Heart right ventricle (tissue), 16 donors: ENCODE measurements at regions of chr3 and their contacts with region 1.

Region 1: GRCh38 chr3:64533617-64534317 is 154.0 kb downstream of the ADAMTS9 start:
- DNase-seq: peak; percentile 82 to 86
- ATAC-seq: peak; percentile 94 to 97 (median 96)
- H3K4me3 ChIP-seq: peak overlapping the region in 3 of 10 donors; percentile 5 to 23 (median 17)
- H3K27ac ChIP-seq: peak overlapping the region in 5 of 10 donors; percentile 1 to 41 (median 26)
- H3K4me1 ChIP-seq: peaks cover 0 to 23% (median 11%) of the 10 kb centered on the region in 9 donors
- H3K27me3 ChIP-seq: no peaks in the 10 kb centered on the region
- CTCF ChIP-seq: peak; percentile 71 to 97 (median 88)

Region 2: GRCh38 chr3:64311424-64311976 is 222.3 kb before region 1 on chr3:
- intact Hi-C with region 1: no loop called
- DNase-seq: no peak
- ATAC-seq: peak in 5 of 8 donors; percentile 7 to 77 (median 59)
- H3K4me3 ChIP-seq: no peak overlapping the region
- H3K27ac ChIP-seq: peak overlapping the region in 2 of 10 donors; percentile 24 to 52
- H3K4me1 ChIP-seq: peaks cover 0 to 14% (median 4%) of the 10 kb centered on the region in 9 donors
- H3K27me3 ChIP-seq: no peaks in the 10 kb centered on the region
- CTCF ChIP-seq: no peak

Region 3: GRCh38 chr3:64642327-64643151 is 108.8 kb after region 1 on chr3:
- intact Hi-C with region 1: loop called in 1 of 10 experiments (anchors 10 kb)
- DNase-seq: peak in 1 of 2 donors; percentile 13
- ATAC-seq: peak in 1 of 8 donors; percentile 41
- H3K4me3 ChIP-seq: no peak overlapping the region
- H3K27ac ChIP-seq: no peak overlapping the region
- H3K4me1 ChIP-seq: peaks cover 0 to 10% (median 0%) of the 10 kb centered on the region in 9 donors
- H3K27me3 ChIP-seq: no peaks in the 10 kb centered on the region
- CTCF ChIP-seq: no peak

Region 4: GRCh38 chr3:64908292-64908691 is 374.5 kb after region 1 on chr3:
- intact Hi-C with region 1: loop called in 1 of 10 experiments (anchors 10 kb)
- DNase-seq: peak in 1 of 2 donors; percentile 73
- ATAC-seq: peak; percentile 76 to 94 (median 91)
- H3K4me3 ChIP-seq: no peak overlapping the region
- H3K27ac ChIP-seq: peak overlapping the region in 9 of 10 donors; percentile 5 to 84 (median 75)
- H3K4me1 ChIP-seq: peaks cover 1 to 69% (median 46%) of the 10 kb centered on the region in 9 donors
- H3K27me3 ChIP-seq: no peaks in the 10 kb centered on the region
- CTCF ChIP-seq: no peak

Region 5: GRCh38 chr3:65170390-65171042 is 636.7 kb after region 1 on chr3:
- intact Hi-C with region 1: loop called in 6 of 10 experiments (anchors 5 to 10 kb)
- DNase-seq: peak; percentile 81 to 91
- ATAC-seq: peak; percentile 68 to 98 (median 94)
- H3K4me3 ChIP-seq: no peak overlapping the region
- H3K27ac ChIP-seq: peak overlapping the region in 9 of 10 donors; percentile 16 to 91 (median 76)
- H3K4me1 ChIP-seq: peaks cover 5 to 32% (median 19%) of the 10 kb centered on the region in 9 donors
- H3K27me3 ChIP-seq: no peaks in the 10 kb centered on the region
- CTCF ChIP-seq: peak; percentile 17 to 69 (median 55)

Region 6: GRCh38 chr3:65342084-65342683 is 808.4 kb after region 1 on chr3:
- intact Hi-C with region 1: loop called in 1 of 10 experiments (anchors 10 kb)
- DNase-seq: peak; percentile 16 to 52
- ATAC-seq: peak in 3 of 8 donors; percentile 45 to 59 (median 50)
- H3K4me3 ChIP-seq: no peak overlapping the region
- H3K27ac ChIP-seq: no peak overlapping the region
- H3K4me1 ChIP-seq: peaks cover 0 to 36% (median 4%) of the 10 kb centered on the region in 9 donors
- H3K27me3 ChIP-seq: no peaks in the 10 kb centered on the region
- CTCF ChIP-seq: peak in 7 of 9 donors; percentile 50 to 65 (median 60)

Region 7: DNA sequence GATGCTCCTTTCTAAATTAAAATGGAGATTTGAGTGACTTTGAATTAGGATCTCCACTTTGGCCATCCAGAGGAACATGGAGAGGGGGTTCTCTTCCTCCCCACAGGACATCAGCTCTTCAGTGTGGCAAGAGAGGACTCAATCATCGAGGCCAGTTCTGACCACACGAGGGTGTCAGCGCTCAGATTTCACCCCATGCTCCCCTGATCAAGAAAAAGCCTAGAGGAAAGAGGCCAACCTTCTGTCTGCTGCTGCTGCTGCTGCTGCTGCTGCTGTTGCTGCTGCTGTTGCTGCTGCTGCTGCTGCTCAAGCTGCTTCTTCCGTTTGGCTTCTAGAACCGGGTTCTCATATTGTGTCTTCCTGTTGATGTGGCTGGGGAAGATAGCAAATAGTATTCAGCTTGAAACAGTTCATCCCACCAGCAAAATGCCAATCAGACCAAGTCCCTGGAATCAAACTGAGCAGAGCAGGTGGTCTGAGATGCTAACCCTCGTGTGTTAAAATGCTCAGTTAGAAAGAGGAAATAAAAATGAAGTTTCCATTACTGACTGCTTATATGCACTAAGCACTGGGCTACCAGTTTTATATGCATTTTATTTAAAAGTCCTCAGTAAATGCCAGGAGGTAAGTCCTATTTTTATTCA is 906.0 kb after region 1 on chr3:
- intact Hi-C with region 1: loop called in 2 of 10 experiments (anchors 5 to 10 kb)
- DNase-seq: peak; percentile 44 to 61
- ATAC-seq: peak; percentile 84 to 93 (median 90)
- H3K4me3 ChIP-seq: no peak overlapping the region
- H3K27ac ChIP-seq: no peak overlapping the region
- H3K4me1 ChIP-seq: peaks cover 0 to 13% (median 6%) of the 10 kb centered on the region in 9 donors
- H3K27me3 ChIP-seq: no peaks in the 10 kb centered on the region
- CTCF ChIP-seq: peak; percentile 36 to 81 (median 69)

Region 8: GRCh38 chr3:65732051-65732935 is 1198.5 kb after region 1 on chr3:
- intact Hi-C with region 1: loop called in 3 of 10 experiments (anchors 5 to 10 kb)
- DNase-seq: peak in 1 of 2 donors; percentile 23
- ATAC-seq: peak; percentile 50 to 75 (median 68)
- H3K4me3 ChIP-seq: no peak overlapping the region
- H3K27ac ChIP-seq: no peak overlapping the region
- H3K4me1 ChIP-seq: peaks cover 4 to 44% (median 22%) of the 10 kb centered on the region in 9 donors
- H3K27me3 ChIP-seq: no peaks in the 10 kb centered on the region
- CTCF ChIP-seq: peak; percentile 54 to 91 (median 82)